ENCODE measurements at regions of chr3 and their contacts with region 1.

Region 1: DNA sequence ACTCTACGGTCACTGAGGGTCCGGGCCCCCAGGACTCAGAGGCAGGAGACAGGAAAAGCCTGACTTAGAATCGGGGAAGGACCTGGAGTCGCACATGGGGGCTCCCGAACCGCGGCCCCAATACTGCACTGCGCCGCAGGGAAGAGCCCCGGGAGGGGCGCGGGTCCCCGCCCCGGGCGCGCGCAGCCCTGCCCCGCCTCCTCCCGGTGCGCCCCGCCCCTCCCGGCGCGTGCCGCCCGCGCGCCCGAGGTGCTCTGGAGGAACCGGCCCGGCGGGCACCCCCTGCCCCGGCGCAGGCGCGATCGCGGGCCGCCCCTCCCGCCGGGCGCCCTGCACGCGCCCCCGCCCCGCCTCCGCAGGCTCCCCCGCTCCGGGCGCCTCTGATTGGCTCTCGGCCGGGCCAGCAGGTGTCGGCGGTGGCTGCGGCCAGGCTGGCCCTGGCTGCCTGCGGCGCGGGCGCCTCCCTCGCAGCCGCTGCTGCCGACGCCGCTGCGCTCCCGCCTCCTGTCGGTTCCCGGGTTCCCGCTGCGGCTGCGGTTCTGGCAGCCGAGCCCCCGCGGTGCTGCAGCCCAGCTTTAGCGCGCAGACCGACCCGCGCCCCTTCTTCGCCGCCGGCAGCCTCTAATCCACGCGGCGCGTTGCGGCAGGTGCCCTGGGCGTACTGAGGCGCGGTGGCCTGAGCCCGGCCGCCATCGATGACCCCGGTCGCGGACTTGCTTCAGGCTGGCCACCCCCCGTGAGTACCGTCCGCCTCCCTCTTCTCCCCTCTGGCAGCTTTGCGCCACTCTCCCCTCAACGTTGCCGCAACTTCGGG is at the start of gene MYRIP:
- DNase-seq: peak; percentile 92
- H3K4me3 Mint-ChIP-seq: peak within 1 kb of the TSS; percentile 94
- H3K27ac Mint-ChIP-seq: peak within 1 kb of the TSS; percentile 70
- H3K4me1 Mint-ChIP-seq: peaks cover 21% of the 10 kb centered on the region
- H3K27me3 Mint-ChIP-seq: peaks cover 55% of the 10 kb centered on the region
- CTCF ChIP-seq: no peak
- total RNA-seq, gene MYRIP: 5.2 and 5.6 TPM in 2 replicates

Region 2: DNA sequence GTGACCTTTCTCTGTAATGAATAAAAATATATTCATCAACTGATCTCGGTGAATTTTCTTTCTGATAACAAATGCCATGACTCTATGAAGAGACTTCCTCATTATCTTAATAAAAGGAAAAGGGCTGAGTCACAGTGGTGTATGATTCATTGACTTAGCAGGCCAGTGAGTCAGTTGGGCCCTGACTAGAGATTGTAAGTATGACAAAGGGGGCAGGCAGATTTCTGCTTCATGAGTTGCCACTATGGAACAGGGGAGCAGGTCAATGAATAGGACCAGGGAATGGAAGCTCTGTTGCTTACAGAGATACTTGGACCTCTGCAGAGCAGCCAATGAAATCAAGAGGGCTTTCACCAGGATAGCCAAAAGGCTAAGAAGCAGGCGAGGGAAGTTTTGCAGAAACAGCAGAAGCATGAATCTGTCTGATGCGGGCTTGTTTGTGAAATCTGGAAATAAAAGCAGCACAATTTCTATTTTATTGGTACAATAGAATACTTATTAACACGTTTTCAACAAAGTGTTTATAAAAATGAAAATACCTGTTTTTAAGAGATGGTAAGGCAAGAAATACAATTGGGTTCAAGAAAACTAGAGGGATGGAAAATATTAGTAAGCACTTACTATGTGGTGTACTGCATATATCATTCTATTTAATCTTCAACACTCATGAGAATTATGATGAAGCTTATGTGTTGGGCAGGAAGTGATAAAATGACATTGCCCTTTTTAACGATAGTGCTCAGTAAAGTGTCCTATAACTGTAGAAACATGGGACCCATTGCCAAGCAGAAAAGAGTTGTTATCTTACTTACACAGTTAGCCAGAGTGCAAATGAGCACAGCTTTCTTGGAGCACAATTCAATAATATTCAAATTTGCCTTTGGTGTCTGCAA is 169.8 kb before region 1 on chr3:
- CTCF ChIA-PET with region 1: no interaction called
- intact Hi-C with region 1: loop called (anchors 5 kb)
- DNase-seq: peak; percentile 63
- H3K4me3 Mint-ChIP-seq: no peak overlapping the region
- H3K27ac Mint-ChIP-seq: peak overlapping the region; percentile 81
- H3K4me1 Mint-ChIP-seq: peaks cover 30% of the 10 kb centered on the region
- H3K27me3 Mint-ChIP-seq: no peaks in the 10 kb centered on the region
- CTCF ChIP-seq: no peak

Region 3: GRCh38 chr3:39748002-39748401 is 61.4 kb before region 1 on chr3:
- CTCF ChIA-PET with region 1: no interaction called
- intact Hi-C with region 1: loop called (anchors 5 kb)
- DNase-seq: peak; percentile 14
- H3K4me3 Mint-ChIP-seq: no peak overlapping the region
- H3K27ac Mint-ChIP-seq: no peak overlapping the region
- H3K4me1 Mint-ChIP-seq: peaks cover 63% of the 10 kb centered on the region
- H3K27me3 Mint-ChIP-seq: no peaks in the 10 kb centered on the region
- CTCF ChIP-seq: no peak

Region 4: GRCh38 chr3:39779511-39780230 is 29.7 kb before region 1 on chr3:
- CTCF ChIA-PET with region 1: no interaction called
- intact Hi-C with region 1: no loop called
- DNase-seq: no peak
- H3K4me3 Mint-ChIP-seq: no peak overlapping the region
- H3K27ac Mint-ChIP-seq: no peak overlapping the region
- H3K4me1 Mint-ChIP-seq: no peaks in the 10 kb centered on the region
- H3K27me3 Mint-ChIP-seq: peaks cover 29% of the 10 kb centered on the region
- CTCF ChIP-seq: no peak

Region 5: DNA sequence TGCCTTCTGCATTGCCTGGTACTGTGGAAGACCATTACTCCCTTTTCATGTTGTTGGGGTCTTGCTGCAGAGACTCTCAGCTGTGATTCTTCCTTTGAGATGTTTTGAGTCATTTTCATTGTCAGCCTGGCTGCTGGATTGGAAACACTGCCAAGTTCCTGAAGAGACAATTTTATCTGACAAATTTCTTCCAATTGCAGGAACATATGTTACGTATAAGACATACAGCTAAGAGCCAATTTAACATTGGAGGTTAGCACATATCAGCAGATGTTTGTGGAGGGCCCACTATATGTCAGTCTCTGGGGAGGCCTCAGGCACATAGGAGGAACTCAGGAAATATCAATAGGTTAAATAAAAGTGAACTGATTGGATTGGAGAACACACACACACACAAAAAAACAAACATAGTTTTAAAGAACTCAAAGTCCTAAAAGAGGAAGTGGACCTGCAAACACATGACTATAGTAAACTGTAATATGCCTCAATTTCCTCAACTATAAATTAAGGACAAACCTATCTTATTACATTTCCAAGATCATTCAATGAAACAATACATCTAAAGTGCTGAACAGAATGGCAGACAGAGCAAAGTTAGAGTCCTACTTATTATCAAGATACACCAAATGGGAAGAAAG is 172.3 kb after region 1 on chr3:
- CTCF ChIA-PET with region 1: no interaction called
- intact Hi-C with region 1: loop called (anchors 5 kb)
- DNase-seq: no peak
- H3K4me3 Mint-ChIP-seq: no peak overlapping the region
- H3K27ac Mint-ChIP-seq: no peak overlapping the region
- H3K4me1 Mint-ChIP-seq: no peaks in the 10 kb centered on the region
- H3K27me3 Mint-ChIP-seq: no peaks in the 10 kb centered on the region
- CTCF ChIP-seq: no peak

Region 6: DNA sequence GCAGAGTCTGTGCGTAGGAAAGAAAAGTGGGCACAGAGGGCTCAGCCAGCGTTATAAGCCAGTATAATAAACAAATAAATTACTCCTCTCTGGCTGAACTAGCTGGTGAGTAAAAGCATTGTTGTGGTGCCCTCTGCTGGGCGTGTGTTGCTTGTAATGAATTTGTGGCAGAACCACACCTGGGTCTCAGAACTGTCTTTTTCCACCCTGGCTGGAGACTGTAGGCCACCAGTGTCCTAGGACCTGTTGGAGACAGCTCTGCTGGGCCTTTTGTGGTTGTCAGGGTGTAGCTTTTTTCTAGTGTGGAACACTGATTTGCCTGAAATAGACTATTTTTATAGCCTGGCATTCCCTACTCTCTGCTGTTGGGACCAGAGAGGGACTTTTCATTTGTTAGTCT is 369.6 kb after region 1 on chr3:
- CTCF ChIA-PET with region 1: interaction called, 10 read pairs
- intact Hi-C with region 1: loop called (anchors 1 kb)
- DNase-seq: peak; percentile 82
- H3K4me3 Mint-ChIP-seq: no peak overlapping the region
- H3K27ac Mint-ChIP-seq: no peak overlapping the region
- H3K4me1 Mint-ChIP-seq: no peaks in the 10 kb centered on the region
- H3K27me3 Mint-ChIP-seq: no peaks in the 10 kb centered on the region
- CTCF ChIP-seq: peak; percentile 59

Measured in Calu3 (cell line).